K562 (cell line): ENCODE measurements at regions of chr12 and their contacts with region 1.

Region 1: DNA sequence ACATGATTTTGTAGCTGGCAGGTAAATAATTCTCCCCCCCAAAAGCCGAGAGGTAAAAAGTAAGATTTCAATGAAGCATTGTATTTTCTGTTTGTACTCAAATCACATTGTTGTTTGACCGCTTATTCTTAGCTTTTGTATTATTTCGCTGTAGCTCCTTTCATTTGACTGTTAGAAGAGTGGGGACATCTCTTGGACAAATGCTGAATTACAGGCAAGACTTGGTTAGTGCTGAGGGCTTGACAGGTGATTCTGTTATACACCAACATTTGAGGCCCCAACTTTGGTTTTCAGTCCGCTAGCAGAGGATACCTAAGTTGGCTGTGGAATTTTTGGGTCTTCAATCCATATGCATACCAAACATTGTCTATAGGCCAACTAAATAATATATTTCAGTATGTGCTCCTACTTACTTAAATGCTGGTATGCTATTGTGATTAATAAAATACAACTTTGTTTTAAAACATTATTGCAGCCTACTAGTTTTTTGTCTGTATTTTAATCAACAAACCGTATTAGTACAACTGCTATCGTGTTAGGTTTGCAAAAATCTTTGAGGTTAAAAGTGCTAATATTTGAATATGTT is 102.2 kb downstream of the ERC1 start:
- DNase-seq: peak in 3 of 4 experiments; percentile 12 to 57 (median 16)
- ATAC-seq: peak; percentile 75
- H3K4me3 ChIP-seq: no peak overlapping the region
- H3K27ac ChIP-seq: no peak overlapping the region
- H3K4me1 ChIP-seq: no peaks in the 10 kb centered on the region
- H3K27me3 ChIP-seq: no peaks in the 10 kb centered on the region
- CTCF ChIP-seq: peak; percentile 46 to 66 (median 56); a peak in 5 of 6 replicates
- EP300 ChIP-seq: no peak
- POLR2A ChIP-seq: no peak
- RAD21 ChIP-seq: peak; percentile 59 to 62

Region 2: GRCh38 chr12:818733-819132 is 274.5 kb before region 1 on chr12:
- CTCF ChIA-PET with region 1: no interaction called
- POLR2A ChIA-PET with region 1: no interaction called
- in situ Hi-C with region 1: no loop called
- intact Hi-C with region 1: loop called (anchors 5 kb)
- DNase-seq: no peak
- ATAC-seq: no peak
- H3K4me3 ChIP-seq: no peak overlapping the region
- H3K27ac ChIP-seq: no peak overlapping the region
- H3K4me1 ChIP-seq: no peaks in the 10 kb centered on the region; a peak in 2 of 5 replicates
- H3K27me3 ChIP-seq: no peaks in the 10 kb centered on the region
- CTCF ChIP-seq: no peak
- EP300 ChIP-seq: no peak
- POLR2A ChIP-seq: no peak
- RAD21 ChIP-seq: no peak